B cell (primary cell): ENCODE measurements at regions of chr16 and their contacts with region 1.

Region 1: DNA sequence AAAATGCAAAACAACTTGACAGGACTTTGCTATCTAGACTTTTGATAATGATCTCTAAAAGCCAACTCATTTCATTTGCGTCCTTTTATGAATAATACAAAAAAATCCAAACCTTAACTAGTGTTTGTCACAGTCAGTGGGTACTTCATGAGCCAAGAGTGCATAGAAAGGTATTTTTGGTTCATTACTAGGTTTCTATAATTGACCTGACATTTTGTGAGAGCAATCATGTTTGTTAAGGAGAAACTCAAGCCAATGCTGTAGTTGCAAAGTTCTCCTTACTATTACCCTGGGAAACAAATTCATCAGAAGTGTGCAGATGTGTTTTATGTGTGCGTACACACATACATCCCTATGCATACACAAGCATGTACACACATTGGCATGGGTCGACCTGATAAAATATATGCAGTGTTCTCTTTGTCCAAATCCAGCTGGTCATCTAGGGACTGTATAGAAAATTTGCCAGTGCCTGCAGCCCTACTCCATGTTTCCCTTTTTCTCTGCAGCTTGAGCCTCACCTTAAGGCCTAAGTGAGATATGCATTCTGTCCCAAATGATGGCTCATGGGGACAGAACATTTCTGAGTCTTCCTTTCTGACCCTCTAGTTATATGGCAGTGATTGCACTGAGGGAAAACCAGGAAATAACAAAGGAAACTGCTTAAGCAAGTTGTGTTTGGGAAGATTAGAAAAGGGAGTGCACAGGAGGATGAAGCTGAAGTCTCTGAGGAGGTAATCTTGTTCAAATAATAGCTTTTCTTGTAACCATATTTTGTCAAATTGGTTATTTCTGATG is 128.1 kb downstream of the CDH13 start:
- DNase-seq: no peak
- ATAC-seq: no peak
- H3K4me3 ChIP-seq: no peak overlapping the region
- H3K4me3 Mint-ChIP-seq: no peak overlapping the region
- H3K27ac ChIP-seq: no peak overlapping the region
- H3K27ac Mint-ChIP-seq: no peak overlapping the region
- H3K4me1 ChIP-seq: peaks cover 8 to 22% of the 10 kb centered on the region in 2 donors
- H3K4me1 Mint-ChIP-seq: peaks cover 13% of the 10 kb centered on the region
- H3K27me3 ChIP-seq: no peaks in the 10 kb centered on the region
- H3K27me3 Mint-ChIP-seq: no peaks in the 10 kb centered on the region
- CTCF ChIP-seq: no peak

Region 2: GRCh38 chr16:82776470-82777146 is 21.7 kb after region 1 on chr16:
- CTCF ChIA-PET with region 1: no interaction called
- POLR2A ChIA-PET with region 1: interaction called, 10 read pairs
- intact Hi-C with region 1: no loop called
- DNase-seq: peak; percentile 80
- ATAC-seq: peak; percentile 76
- H3K4me3 ChIP-seq: peak overlapping the region in 1 of 5 experiments; percentile 33
- H3K4me3 Mint-ChIP-seq: peak overlapping the region; percentile 62
- H3K27ac ChIP-seq: peak overlapping the region; percentile 71 to 73
- H3K27ac Mint-ChIP-seq: peak overlapping the region; percentile 91
- H3K4me1 ChIP-seq: peaks cover 54 to 72% of the 10 kb centered on the region in 2 donors
- H3K4me1 Mint-ChIP-seq: peaks cover 44% of the 10 kb centered on the region
- H3K27me3 ChIP-seq: no peaks in the 10 kb centered on the region
- H3K27me3 Mint-ChIP-seq: no peaks in the 10 kb centered on the region
- CTCF ChIP-seq: no peak